ENCODE measurements at regions of chr11 and their contacts with region 1.

Region 1: DNA sequence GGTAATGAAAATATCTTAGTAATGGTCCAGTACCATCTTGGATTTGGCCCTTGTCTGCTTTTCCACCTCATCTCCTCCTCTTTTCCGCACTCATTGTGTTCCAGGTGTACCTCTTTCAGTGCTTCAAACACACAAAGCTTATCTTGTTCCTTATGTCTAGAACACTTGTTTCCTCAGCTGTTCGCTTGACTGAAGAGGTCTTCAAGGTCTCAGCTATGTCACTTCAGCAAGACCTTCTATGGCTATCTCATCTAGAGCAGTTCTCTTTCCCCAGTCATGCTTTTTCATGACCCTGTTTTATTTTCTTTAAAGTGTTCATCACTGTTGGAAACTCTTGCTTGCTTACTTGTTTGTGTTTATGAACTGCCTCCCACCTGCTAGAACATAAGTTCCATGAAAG is 47.4 kb downstream of the UVRAG start:
- DNase-seq: no peak
- H3K4me3 ChIP-seq: no peak overlapping the region
- H3K27ac ChIP-seq: no peak overlapping the region
- H3K4me1 ChIP-seq: no peaks in the 10 kb centered on the region
- H3K27me3 ChIP-seq: no peaks in the 10 kb centered on the region
- CTCF ChIP-seq: no peak
- POLR2A ChIP-seq: no peak

Region 2: GRCh38 chr11:75615706-75616105 is 246.7 kb before region 1 on chr11:
- intact Hi-C with region 1: loop called (anchors 5 kb)
- DNase-seq: no peak
- H3K4me3 ChIP-seq: no peak overlapping the region
- H3K27ac ChIP-seq: no peak overlapping the region
- H3K4me1 ChIP-seq: no peaks in the 10 kb centered on the region
- H3K27me3 ChIP-seq: no peaks in the 10 kb centered on the region
- CTCF ChIP-seq: no peak
- POLR2A ChIP-seq: no peak